B cell (primary cell): ENCODE measurements at regions of chr1 and their contacts with region 1.

Region 1: GRCh38 chr1:37919277-37919676 is 27.6 kb downstream of the INPP5B start:
- DNase-seq: peak; percentile 23
- ATAC-seq: no peak
- H3K4me3 ChIP-seq: no peak overlapping the region
- H3K4me3 Mint-ChIP-seq: no peak overlapping the region
- H3K27ac ChIP-seq: no peak overlapping the region
- H3K27ac Mint-ChIP-seq: no peak overlapping the region
- H3K4me1 ChIP-seq: peaks cover 55 to 56% of the 10 kb centered on the region in 2 donors
- H3K4me1 Mint-ChIP-seq: peaks cover 45% of the 10 kb centered on the region
- H3K27me3 ChIP-seq: no peaks in the 10 kb centered on the region
- H3K27me3 Mint-ChIP-seq: no peaks in the 10 kb centered on the region
- CTCF ChIP-seq: peak; percentile 53

Region 2: GRCh38 chr1:36463803-36464604 is 1455.3 kb before region 1 on chr1 and contains the start of gene MRPS15:
- CTCF ChIA-PET with region 1: no interaction called
- POLR2A ChIA-PET with region 1: interaction called, 15 read pairs
- intact Hi-C with region 1: no loop called
- DNase-seq: peak; percentile 97
- ATAC-seq: peak; percentile 98
- H3K4me3 ChIP-seq: peak within 1 kb of the TSS; percentile 75 to 96 (median 89)
- H3K4me3 Mint-ChIP-seq: peak within 1 kb of the TSS; percentile 92
- H3K27ac ChIP-seq: peak within 1 kb of the TSS; percentile 87 to 99
- H3K27ac Mint-ChIP-seq: peak within 1 kb of the TSS; percentile 98
- H3K4me1 ChIP-seq: peaks cover 11 to 17% of the 10 kb centered on the region in 2 donors
- H3K4me1 Mint-ChIP-seq: peaks cover 27% of the 10 kb centered on the region
- H3K27me3 ChIP-seq: no peaks in the 10 kb centered on the region
- H3K27me3 Mint-ChIP-seq: no peaks in the 10 kb centered on the region
- CTCF ChIP-seq: no peak
- total RNA-seq, gene MRPS15: 34.4 and 34.8 TPM in 2 replicates

Region 3: GRCh38 chr1:37692078-37692833 is 227.0 kb before region 1 on chr1 and contains the start of gene CDCA8:
- CTCF ChIA-PET with region 1: no interaction called
- POLR2A ChIA-PET with region 1: no interaction called
- intact Hi-C with region 1: no loop called
- DNase-seq: peak; percentile 99
- ATAC-seq: peak; percentile 89
- H3K4me3 ChIP-seq: peak within 1 kb of the TSS; percentile 52 to 91 (median 74)
- H3K4me3 Mint-ChIP-seq: peak within 1 kb of the TSS; percentile 99
- H3K27ac ChIP-seq: peak within 1 kb of the TSS; percentile 19 to 65
- H3K27ac Mint-ChIP-seq: peak within 1 kb of the TSS; percentile 94
- H3K4me1 ChIP-seq: peaks cover 19 to 34% of the 10 kb centered on the region in 2 donors
- H3K4me1 Mint-ChIP-seq: peaks cover 40% of the 10 kb centered on the region
- H3K27me3 ChIP-seq: no peaks in the 10 kb centered on the region
- H3K27me3 Mint-ChIP-seq: no peaks in the 10 kb centered on the region
- CTCF ChIP-seq: peak; percentile 67
- total RNA-seq, gene CDCA8: 1.3 and 1.5 TPM in 2 replicates

Region 4: DNA sequence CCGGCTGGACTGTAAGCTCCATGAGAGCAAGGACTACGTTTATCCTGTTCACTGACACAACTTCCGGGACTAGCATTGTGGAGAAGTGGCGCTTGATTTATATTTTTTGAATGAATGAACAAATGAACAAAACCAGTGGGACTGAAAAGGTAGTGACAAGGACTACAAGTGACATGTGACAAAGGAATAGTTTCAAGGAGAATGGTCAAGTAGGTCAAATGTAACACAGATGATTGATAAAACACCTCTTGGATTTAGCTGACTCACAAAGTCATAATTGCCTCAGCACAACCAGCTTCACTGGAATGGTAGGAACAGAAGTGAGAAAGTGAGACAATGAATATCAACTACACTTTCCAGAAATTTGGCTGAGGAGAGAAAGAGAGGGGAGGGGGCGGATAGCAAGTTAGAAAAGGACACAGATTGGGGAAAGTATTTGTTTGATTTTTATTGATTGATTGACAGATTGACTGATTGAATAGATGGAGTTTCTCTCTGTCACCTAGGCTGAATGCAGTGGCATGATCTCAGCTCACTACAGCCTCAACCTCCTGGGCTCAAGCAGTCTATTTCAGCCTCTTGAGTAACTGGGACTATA is 74.1 kb before region 1 on chr1:
- CTCF ChIA-PET with region 1: no interaction called
- POLR2A ChIA-PET with region 1: no interaction called
- intact Hi-C with region 1: no loop called
- DNase-seq: no peak
- ATAC-seq: no peak
- H3K4me3 ChIP-seq: no peak overlapping the region
- H3K4me3 Mint-ChIP-seq: peak overlapping the region; percentile 41
- H3K27ac ChIP-seq: peak overlapping the region in 1 of 2 donors; percentile 76
- H3K27ac Mint-ChIP-seq: peak overlapping the region; percentile 38
- H3K4me1 ChIP-seq: peaks cover 13 to 15% of the 10 kb centered on the region in 2 donors
- H3K4me1 Mint-ChIP-seq: peaks cover 36% of the 10 kb centered on the region
- H3K27me3 ChIP-seq: no peaks in the 10 kb centered on the region
- H3K27me3 Mint-ChIP-seq: no peaks in the 10 kb centered on the region
- CTCF ChIP-seq: no peak

Region 5: DNA sequence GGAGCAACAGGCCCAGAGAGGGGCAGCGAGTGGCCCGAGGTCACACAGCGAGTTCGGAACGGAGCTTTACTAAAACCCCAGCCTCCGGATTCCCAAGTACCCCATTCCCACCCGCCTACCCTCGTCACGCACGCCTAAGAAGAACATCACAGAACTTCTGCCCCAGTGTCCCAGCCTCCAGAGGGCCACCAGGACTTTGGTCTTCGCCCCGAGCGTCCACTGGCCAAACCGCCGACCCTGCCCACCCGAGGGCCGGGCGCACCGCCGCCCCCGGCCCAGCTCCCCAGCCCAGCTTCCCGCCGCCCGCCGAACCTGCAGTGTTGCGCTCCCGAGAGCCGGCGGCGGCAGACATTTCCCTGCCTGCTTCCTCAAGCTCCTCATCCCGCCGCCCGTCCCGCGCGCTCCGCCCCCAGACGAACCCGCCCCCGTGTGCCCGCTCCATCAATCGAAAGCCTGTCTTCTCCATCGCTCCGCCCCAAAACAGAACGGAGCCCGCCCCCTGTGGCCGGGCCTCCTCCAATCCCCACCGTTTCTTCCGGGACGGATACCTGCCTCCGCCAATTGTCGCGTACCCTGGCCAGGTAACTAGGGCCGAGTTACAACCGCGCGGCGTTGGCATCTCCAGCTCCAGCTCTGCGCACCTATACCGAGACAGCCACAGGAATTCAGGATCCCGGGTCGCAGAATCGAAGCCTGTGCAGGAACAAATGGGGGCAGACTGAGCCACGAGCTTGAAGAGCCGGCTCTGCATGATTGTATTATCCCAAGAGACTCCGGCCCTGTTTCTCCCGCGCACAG is 12.3 kb after region 1 on chr1:
- CTCF ChIA-PET with region 1: interaction called, 13 read pairs
- POLR2A ChIA-PET with region 1: interaction called, 4 read pairs
- intact Hi-C with region 1: loop called (anchors 1 kb)
- DNase-seq: peak; percentile 97
- ATAC-seq: peak; percentile 99
- H3K4me3 ChIP-seq: peak overlapping the region; percentile 69 to 98 (median 97)
- H3K4me3 Mint-ChIP-seq: peak overlapping the region; percentile 89
- H3K27ac ChIP-seq: peak overlapping the region in 1 of 2 donors; percentile 80
- H3K27ac Mint-ChIP-seq: peak overlapping the region; percentile 83
- H3K4me1 ChIP-seq: peaks cover 18 to 28% of the 10 kb centered on the region in 2 donors
- H3K4me1 Mint-ChIP-seq: peaks cover 42% of the 10 kb centered on the region
- H3K27me3 ChIP-seq: no peaks in the 10 kb centered on the region
- H3K27me3 Mint-ChIP-seq: no peaks in the 10 kb centered on the region
- CTCF ChIP-seq: no peak

Region 6: GRCh38 chr1:37946703-37947360 is 27.6 kb after region 1 on chr1 and contains the start of gene INPP5B:
- CTCF ChIA-PET with region 1: interaction called, 5 read pairs
- POLR2A ChIA-PET with region 1: interaction called, 3 read pairs
- intact Hi-C with region 1: loop called (anchors 1 kb)
- DNase-seq: peak; percentile 79
- ATAC-seq: peak; percentile 100
- H3K4me3 ChIP-seq: peak within 1 kb of the TSS; percentile 50 to 73 (median 67)
- H3K4me3 Mint-ChIP-seq: peak within 1 kb of the TSS; percentile 91
- H3K27ac ChIP-seq: peak within 1 kb of the TSS in 1 of 2 donors; percentile 56
- H3K27ac Mint-ChIP-seq: peak within 1 kb of the TSS; percentile 86
- H3K4me1 ChIP-seq: peaks cover 14 to 19% of the 10 kb centered on the region in 2 donors
- H3K4me1 Mint-ChIP-seq: peaks cover 14% of the 10 kb centered on the region
- H3K27me3 ChIP-seq: no peaks in the 10 kb centered on the region
- H3K27me3 Mint-ChIP-seq: no peaks in the 10 kb centered on the region
- CTCF ChIP-seq: no peak
- total RNA-seq, gene INPP5B: 63.3 and 66.9 TPM in 2 replicates

Region 7: GRCh38 chr1:37958690-37959089 is 39.4 kb after region 1 on chr1:
- CTCF ChIA-PET with region 1: no interaction called
- POLR2A ChIA-PET with region 1: no interaction called
- intact Hi-C with region 1: no loop called
- DNase-seq: no peak
- ATAC-seq: no peak
- H3K4me3 ChIP-seq: no peak overlapping the region
- H3K4me3 Mint-ChIP-seq: no peak overlapping the region
- H3K27ac ChIP-seq: no peak overlapping the region
- H3K27ac Mint-ChIP-seq: no peak overlapping the region
- H3K4me1 ChIP-seq: no peaks in the 10 kb centered on the region
- H3K4me1 Mint-ChIP-seq: no peaks in the 10 kb centered on the region
- H3K27me3 ChIP-seq: no peaks in the 10 kb centered on the region
- H3K27me3 Mint-ChIP-seq: no peaks in the 10 kb centered on the region
- CTCF ChIP-seq: no peak

Region 8: DNA sequence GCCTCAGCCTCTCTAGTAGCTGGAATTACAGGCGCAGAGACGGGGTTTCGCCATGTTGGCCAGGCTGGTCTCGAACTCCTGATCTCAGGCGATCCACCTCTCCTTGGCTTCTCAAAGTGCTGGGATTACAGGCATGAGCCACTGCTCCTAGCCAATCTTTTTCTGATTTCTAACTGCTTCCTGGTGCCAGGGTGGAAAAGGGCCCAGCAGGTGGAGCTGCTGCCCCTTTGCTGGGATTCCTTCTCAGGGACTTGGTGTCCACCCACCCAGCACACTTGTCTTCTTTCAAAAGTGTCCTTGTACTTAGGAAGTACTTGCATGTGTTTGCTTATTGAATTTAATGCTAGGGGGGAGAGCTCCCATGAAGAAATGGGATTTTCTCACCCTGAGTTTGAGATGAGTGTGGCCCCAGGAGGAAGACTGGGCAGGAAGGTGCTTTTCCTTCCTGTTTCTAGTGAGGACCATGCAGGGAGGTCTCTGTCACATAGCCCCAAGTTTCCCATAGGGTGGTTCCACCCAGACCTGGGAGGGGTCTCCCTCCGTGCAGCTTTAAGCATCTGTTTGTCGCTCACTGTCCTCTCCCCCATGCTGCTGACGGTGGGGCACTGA is 107.4 kb after region 1 on chr1:
- CTCF ChIA-PET with region 1: no interaction called
- POLR2A ChIA-PET with region 1: no interaction called
- intact Hi-C with region 1: no loop called
- DNase-seq: peak; percentile 38
- ATAC-seq: no peak
- H3K4me3 ChIP-seq: no peak overlapping the region
- H3K4me3 Mint-ChIP-seq: no peak overlapping the region
- H3K27ac ChIP-seq: no peak overlapping the region
- H3K27ac Mint-ChIP-seq: no peak overlapping the region
- H3K4me1 ChIP-seq: peaks cover 5 to 13% of the 10 kb centered on the region in 2 donors
- H3K4me1 Mint-ChIP-seq: peaks cover 19% of the 10 kb centered on the region
- H3K27me3 ChIP-seq: no peaks in the 10 kb centered on the region
- H3K27me3 Mint-ChIP-seq: peaks cover 4% of the 10 kb centered on the region
- CTCF ChIP-seq: peak; percentile 31